ENCODE measurements at regions of chr5 and their contacts with region 1.

Region 1: DNA sequence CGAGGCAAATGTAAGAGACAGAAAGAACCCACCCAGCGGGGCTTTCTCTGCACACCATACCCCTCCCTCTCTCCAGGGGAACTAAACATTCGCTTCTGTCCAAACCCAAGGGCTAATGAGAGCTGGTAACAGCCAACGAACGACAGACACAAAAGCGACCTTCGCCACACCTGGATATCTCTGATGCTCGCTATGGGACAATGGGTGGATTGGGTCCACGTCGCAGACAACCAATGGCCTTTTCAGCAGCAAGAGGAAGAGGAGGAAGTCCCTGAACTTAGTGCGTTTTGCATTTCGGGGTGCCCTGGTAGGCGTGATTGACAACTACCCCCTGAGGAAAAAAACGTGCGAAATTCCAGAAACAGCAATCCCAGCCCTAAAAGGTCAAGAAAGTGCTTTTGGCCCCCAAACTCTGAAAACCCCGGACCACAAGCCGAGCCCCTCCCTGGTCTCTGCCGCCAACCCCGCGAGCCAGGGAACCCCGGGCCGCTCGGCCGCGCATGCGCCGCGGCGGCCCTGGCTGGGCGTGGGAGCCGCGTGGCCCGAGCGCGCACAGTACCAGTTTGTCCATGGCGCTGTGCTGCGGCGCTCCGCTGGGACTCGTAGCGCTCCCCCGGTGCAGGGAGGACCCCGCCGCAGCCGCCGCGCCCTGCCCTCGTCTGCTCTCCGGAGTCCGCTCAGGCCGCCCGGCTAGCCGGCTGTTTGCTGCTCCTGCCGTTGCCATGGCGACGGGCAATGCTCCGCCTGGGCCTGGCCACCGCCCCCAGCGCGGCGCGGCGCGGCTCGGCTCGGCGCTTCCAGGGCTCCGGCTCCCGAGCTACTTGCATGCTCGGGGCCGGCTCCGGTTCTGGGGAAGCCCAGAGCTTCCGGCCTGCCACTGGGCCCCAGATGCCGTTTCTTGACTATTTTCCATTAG is 66.9 kb upstream of the DNAH5 start:
- DNase-seq: peak; percentile 95 to 96
- H3K4me3 ChIP-seq: peak overlapping the region; percentile 37
- H3K4me3 Mint-ChIP-seq: peak overlapping the region; percentile 90
- H3K27ac Mint-ChIP-seq: peak overlapping the region; percentile 76
- H3K4me1 ChIP-seq: peaks cover 10% of the 10 kb centered on the region
- H3K4me1 Mint-ChIP-seq: peaks cover 14% of the 10 kb centered on the region
- H3K27me3 ChIP-seq: no peaks in the 10 kb centered on the region
- H3K27me3 Mint-ChIP-seq: no peaks in the 10 kb centered on the region
- CTCF ChIP-seq: no peak

Region 2: DNA sequence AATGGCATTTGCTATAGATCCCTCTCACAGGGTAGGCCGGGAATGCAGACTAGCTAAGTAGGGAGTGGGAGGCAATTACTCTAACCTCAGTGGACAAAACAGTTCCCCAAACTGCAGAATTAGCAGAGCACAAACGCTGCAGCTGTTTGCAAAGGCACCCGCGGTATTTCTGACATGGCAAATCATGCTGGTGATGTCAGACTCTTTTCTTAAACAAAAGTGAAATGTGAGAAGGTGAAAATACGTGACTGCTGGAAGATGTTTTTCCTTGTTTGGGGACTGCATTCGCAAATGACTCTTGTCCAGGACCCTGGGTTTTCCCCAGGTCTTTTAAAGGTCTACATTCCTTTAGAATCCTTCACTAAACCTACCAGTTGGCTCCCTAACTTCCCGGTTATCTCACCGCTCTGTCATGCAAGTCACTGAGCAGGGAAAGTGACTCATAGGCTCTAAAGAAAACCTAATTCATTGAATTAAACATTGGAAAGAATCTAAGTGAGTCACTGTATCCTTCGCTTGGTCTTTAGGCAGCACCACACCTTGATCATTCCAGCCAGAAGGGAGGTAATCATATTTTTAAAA is 24.6 kb after region 1 on chr5:
- CTCF ChIA-PET with region 1: no interaction called
- POLR2A ChIA-PET with region 1: no interaction called
- intact Hi-C with region 1: loop called (anchors 1 kb)
- DNase-seq: peak; percentile 49 to 71
- H3K4me3 ChIP-seq: no peak overlapping the region
- H3K4me3 Mint-ChIP-seq: peak overlapping the region; percentile 56
- H3K27ac Mint-ChIP-seq: peak overlapping the region; percentile 89
- H3K4me1 ChIP-seq: peaks cover 63% of the 10 kb centered on the region
- H3K4me1 Mint-ChIP-seq: peaks cover 12% of the 10 kb centered on the region
- H3K27me3 ChIP-seq: no peaks in the 10 kb centered on the region
- H3K27me3 Mint-ChIP-seq: no peaks in the 10 kb centered on the region
- CTCF ChIP-seq: no peak

Region 3: GRCh38 chr5:14124027-14124426 is 112.7 kb after region 1 on chr5:
- CTCF ChIA-PET with region 1: no interaction called
- POLR2A ChIA-PET with region 1: no interaction called
- intact Hi-C with region 1: no loop called
- DNase-seq: no peak
- H3K4me3 ChIP-seq: no peak overlapping the region
- H3K4me3 Mint-ChIP-seq: no peak overlapping the region
- H3K27ac Mint-ChIP-seq: no peak overlapping the region
- H3K4me1 ChIP-seq: no peaks in the 10 kb centered on the region
- H3K4me1 Mint-ChIP-seq: no peaks in the 10 kb centered on the region
- H3K27me3 ChIP-seq: no peaks in the 10 kb centered on the region
- H3K27me3 Mint-ChIP-seq: no peaks in the 10 kb centered on the region
- CTCF ChIP-seq: no peak

Measured in Caco-2 (cell line).